Natural killer cell (primary cell): ENCODE measurements at regions of chr6 and their contacts with region 1.

Region 1: DNA sequence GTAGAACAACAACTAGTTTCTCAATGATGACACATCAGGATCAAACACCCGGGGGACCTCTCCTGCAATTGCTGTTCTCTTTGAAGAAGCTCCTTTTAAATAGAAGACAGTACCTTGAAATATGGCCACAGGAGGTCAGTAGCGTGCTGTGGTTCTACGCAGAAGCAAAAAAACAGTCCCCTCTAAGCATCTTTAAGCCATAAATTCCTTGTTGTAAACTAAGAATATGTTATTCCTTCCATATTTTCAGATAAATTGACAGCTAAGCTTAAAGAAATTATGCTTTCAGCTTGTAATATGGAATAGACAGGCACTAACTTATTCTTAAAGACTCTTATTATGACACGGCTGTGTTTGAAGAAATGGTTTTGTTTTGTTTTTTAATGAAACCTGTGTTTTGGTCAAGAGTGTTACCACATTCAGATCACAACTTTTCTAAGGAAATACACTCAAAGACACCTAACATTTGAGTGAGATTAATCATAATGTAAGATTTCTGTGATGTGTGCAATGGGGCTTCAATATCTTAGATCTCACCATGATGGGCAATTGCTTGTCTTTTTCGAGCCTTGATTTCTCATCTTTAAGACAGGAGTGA is 49.7 kb upstream of the IL20RA start:
- DNase-seq: peak; percentile 30 to 81
- ATAC-seq: peak; percentile 73 to 85 (median 84)
- H3K4me3 ChIP-seq: peak overlapping the region; percentile 4
- H3K4me3 Mint-ChIP-seq: peak overlapping the region; percentile 68
- H3K27ac ChIP-seq: peak overlapping the region; percentile 23
- H3K27ac Mint-ChIP-seq: peak overlapping the region; percentile 36 to 45
- H3K4me1 ChIP-seq: peaks cover 12% of the 10 kb centered on the region
- H3K4me1 Mint-ChIP-seq: peaks cover 20 to 24% of the 10 kb centered on the region in 2 donors
- H3K27me3 ChIP-seq: no peaks in the 10 kb centered on the region
- H3K27me3 Mint-ChIP-seq: peaks cover 6 to 7% of the 10 kb centered on the region in 2 donors
- CTCF ChIP-seq: peak; percentile 80

Region 2: DNA sequence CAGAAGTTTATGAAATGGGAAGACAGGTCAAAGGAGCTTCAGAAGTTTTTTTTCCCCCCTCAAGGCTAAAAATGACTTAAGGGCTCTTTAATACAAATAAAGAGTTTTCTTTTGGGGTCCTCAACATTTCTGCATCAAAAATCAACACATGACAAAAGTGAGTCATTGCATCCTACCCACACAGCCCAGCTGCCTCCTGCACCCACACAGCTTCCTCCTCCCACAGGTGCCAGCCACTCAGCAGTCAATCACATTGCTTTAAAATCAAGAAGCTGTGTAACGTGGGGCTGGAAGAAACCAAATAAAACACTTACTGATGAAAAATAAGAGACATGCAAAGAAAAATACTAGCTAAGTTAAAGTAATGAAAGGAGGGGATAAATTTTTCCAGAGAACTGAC is 370.7 kb before region 1 on chr6:
- intact Hi-C with region 1: no loop called
- DNase-seq: peak; percentile 21 to 52
- ATAC-seq: peak; percentile 87 to 99 (median 94)
- H3K4me3 ChIP-seq: no peak overlapping the region
- H3K4me3 Mint-ChIP-seq: no peak overlapping the region
- H3K27ac ChIP-seq: no peak overlapping the region
- H3K27ac Mint-ChIP-seq: peak overlapping the region; percentile 32 to 43
- H3K4me1 ChIP-seq: peaks cover 12% of the 10 kb centered on the region
- H3K4me1 Mint-ChIP-seq: peaks cover 27 to 52% of the 10 kb centered on the region in 2 donors
- H3K27me3 ChIP-seq: no peaks in the 10 kb centered on the region
- H3K27me3 Mint-ChIP-seq: no peaks in the 10 kb centered on the region
- CTCF ChIP-seq: no peak

Region 3: GRCh38 chr6:136989571-136990241 is 104.8 kb before region 1 on chr6:
- intact Hi-C with region 1: no loop called
- DNase-seq: no peak
- ATAC-seq: peak in 1 of 3 donors; percentile 25
- H3K4me3 ChIP-seq: no peak overlapping the region
- H3K4me3 Mint-ChIP-seq: no peak overlapping the region
- H3K27ac ChIP-seq: no peak overlapping the region
- H3K27ac Mint-ChIP-seq: no peak overlapping the region
- H3K4me1 ChIP-seq: peaks cover 7% of the 10 kb centered on the region
- H3K4me1 Mint-ChIP-seq: no peaks in the 10 kb centered on the region
- H3K27me3 ChIP-seq: peaks cover 31% of the 10 kb centered on the region
- H3K27me3 Mint-ChIP-seq: peaks cover 64 to 78% of the 10 kb centered on the region in 2 donors
- CTCF ChIP-seq: no peak

Region 4: DNA sequence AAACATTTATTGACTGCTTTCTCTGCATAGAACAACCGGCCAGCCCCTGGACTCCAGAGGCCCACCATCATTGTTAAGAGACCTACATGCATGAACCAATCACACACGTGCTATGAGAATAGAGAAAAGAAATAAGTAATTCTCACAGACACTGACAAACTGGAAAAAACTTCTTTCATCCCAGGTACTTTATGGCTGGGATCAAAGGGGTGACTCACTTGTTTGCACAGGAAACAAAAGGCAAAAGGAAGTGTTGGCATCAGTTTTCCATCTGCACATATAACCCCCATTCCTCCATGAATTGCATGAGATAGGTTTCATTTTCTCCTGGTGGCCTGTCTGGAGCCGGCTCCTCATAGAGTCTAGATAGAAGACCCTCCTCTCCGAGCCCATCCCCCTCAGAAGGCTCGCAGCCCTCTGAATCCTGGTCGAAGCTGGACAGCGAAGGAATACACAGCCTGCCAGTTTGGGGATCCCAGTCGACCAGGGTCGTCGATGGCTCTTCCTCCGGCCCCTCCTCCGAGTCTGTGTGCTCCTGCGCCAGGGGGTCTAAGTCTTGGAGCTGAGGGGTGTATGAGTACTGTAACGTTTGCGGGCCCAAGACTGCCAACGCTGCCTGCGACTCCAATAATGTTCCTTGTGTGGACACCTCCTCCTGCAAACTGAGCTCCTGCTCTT is 93.1 kb before region 1 on chr6:
- intact Hi-C with region 1: no loop called
- DNase-seq: no peak
- ATAC-seq: no peak
- H3K4me3 ChIP-seq: no peak overlapping the region
- H3K4me3 Mint-ChIP-seq: no peak overlapping the region
- H3K27ac ChIP-seq: no peak overlapping the region
- H3K27ac Mint-ChIP-seq: no peak overlapping the region
- H3K4me1 ChIP-seq: no peaks in the 10 kb centered on the region
- H3K4me1 Mint-ChIP-seq: no peaks in the 10 kb centered on the region
- H3K27me3 ChIP-seq: peaks cover 26% of the 10 kb centered on the region
- H3K27me3 Mint-ChIP-seq: peaks cover 40 to 86% of the 10 kb centered on the region in 2 donors
- CTCF ChIP-seq: no peak

Region 5: DNA sequence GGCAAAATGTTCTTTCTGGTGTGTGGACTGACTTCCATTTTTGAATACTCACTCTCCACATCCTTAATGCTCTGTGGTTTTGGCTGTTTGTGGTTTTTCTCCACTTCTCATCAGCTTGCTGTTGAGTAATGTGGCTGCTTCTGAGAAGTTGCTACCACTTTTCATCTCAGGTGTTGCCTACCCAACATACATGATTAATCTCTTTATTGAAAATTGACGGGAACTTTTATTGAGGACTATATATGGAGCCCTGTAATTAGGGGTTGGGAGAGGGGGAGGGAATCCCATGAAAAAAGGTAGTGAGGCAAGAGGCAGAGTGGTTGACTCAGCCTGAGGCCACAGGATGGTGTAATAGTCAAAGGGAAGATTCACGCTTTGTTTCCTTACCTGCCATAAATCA is 61.3 kb after region 1 on chr6:
- intact Hi-C with region 1: loop called (anchors 5 kb)
- DNase-seq: peak in 1 of 2 donors; percentile 74
- ATAC-seq: peak; percentile 85 to 98 (median 86)
- H3K4me3 ChIP-seq: no peak overlapping the region
- H3K4me3 Mint-ChIP-seq: peak overlapping the region; percentile 72
- H3K27ac ChIP-seq: no peak overlapping the region
- H3K27ac Mint-ChIP-seq: peak overlapping the region; percentile 45 to 89
- H3K4me1 ChIP-seq: peaks cover 19% of the 10 kb centered on the region
- H3K4me1 Mint-ChIP-seq: peaks cover 36 to 43% of the 10 kb centered on the region in 2 donors
- H3K27me3 ChIP-seq: peaks cover 3% of the 10 kb centered on the region
- H3K27me3 Mint-ChIP-seq: peaks cover 14 to 23% of the 10 kb centered on the region in 2 donors
- CTCF ChIP-seq: no peak

Region 6: GRCh38 chr6:137165375-137166246 is 71.1 kb after region 1 on chr6:
- intact Hi-C with region 1: loop called (anchors 5 kb)
- DNase-seq: peak; percentile 38 to 58
- ATAC-seq: peak; percentile 70 to 82 (median 72)
- H3K4me3 ChIP-seq: no peak overlapping the region
- H3K4me3 Mint-ChIP-seq: peak overlapping the region; percentile 77
- H3K27ac ChIP-seq: peak overlapping the region; percentile 5
- H3K27ac Mint-ChIP-seq: peak overlapping the region; percentile 39 to 53
- H3K4me1 ChIP-seq: peaks cover 27% of the 10 kb centered on the region
- H3K4me1 Mint-ChIP-seq: peaks cover 44 to 47% of the 10 kb centered on the region in 2 donors
- H3K27me3 ChIP-seq: no peaks in the 10 kb centered on the region
- H3K27me3 Mint-ChIP-seq: peaks cover 22 to 31% of the 10 kb centered on the region in 2 donors
- CTCF ChIP-seq: no peak

Region 7: GRCh38 chr6:137313928-137314855 is 219.7 kb after region 1 on chr6:
- intact Hi-C with region 1: loop called (anchors 1 kb)
- DNase-seq: peak; percentile 44 to 87
- ATAC-seq: peak; percentile 81 to 88 (median 81)
- H3K4me3 ChIP-seq: no peak overlapping the region
- H3K4me3 Mint-ChIP-seq: no peak overlapping the region
- H3K27ac ChIP-seq: no peak overlapping the region
- H3K27ac Mint-ChIP-seq: no peak overlapping the region
- H3K4me1 ChIP-seq: peaks cover 9% of the 10 kb centered on the region
- H3K4me1 Mint-ChIP-seq: peaks cover 6 to 9% of the 10 kb centered on the region in 2 donors
- H3K27me3 ChIP-seq: no peaks in the 10 kb centered on the region
- H3K27me3 Mint-ChIP-seq: peaks cover 0 to 4% of the 10 kb centered on the region in 2 donors
- CTCF ChIP-seq: peak; percentile 82

Region 8: GRCh38 chr6:137415127-137415833 is 320.8 kb after region 1 on chr6:
- intact Hi-C with region 1: loop called (anchors 1 kb)
- DNase-seq: peak; percentile 50 to 85
- ATAC-seq: peak; percentile 90 to 93 (median 91)
- H3K4me3 ChIP-seq: peak overlapping the region; percentile 41
- H3K4me3 Mint-ChIP-seq: peak overlapping the region; percentile 93
- H3K27ac ChIP-seq: peak overlapping the region; percentile 87
- H3K27ac Mint-ChIP-seq: peak overlapping the region; percentile 94 to 98
- H3K4me1 ChIP-seq: peaks cover 16% of the 10 kb centered on the region
- H3K4me1 Mint-ChIP-seq: peaks cover 20 to 21% of the 10 kb centered on the region in 2 donors
- H3K27me3 ChIP-seq: no peaks in the 10 kb centered on the region
- H3K27me3 Mint-ChIP-seq: no peaks in the 10 kb centered on the region
- CTCF ChIP-seq: peak; percentile 74

Region 9: DNA sequence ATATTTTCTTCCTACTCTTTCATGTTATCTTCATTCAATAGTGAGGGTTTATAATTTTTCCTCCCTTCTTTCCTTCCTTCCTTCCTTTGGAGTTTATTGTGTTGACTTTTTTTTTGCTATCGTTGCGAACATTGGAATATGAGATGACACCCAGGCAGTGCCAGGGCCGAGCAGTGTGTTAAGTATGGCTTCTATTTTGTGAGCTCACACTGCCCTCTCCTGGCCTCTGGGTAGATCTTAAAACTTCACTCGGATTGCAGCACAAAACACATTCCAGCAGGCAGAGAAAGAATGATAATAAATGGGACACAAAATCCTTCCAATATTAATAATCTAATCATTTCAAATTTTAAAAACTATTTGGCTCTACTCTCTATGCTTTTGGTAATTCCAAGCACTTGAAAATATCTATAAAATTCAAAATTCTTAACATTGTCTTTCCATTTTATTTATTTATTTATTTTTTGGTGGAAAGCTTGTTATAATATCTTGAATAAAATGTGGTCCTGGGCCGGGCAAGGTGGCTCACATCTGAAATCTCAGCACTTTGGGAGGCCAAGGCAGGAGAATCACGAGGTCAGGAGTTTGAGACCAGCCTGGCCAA is 547.1 kb after region 1 on chr6:
- intact Hi-C with region 1: loop called (anchors 1 kb)
- DNase-seq: peak; percentile 47 to 85
- ATAC-seq: peak; percentile 82 to 95 (median 92)
- H3K4me3 ChIP-seq: no peak overlapping the region
- H3K4me3 Mint-ChIP-seq: no peak overlapping the region
- H3K27ac ChIP-seq: no peak overlapping the region
- H3K27ac Mint-ChIP-seq: no peak overlapping the region
- H3K4me1 ChIP-seq: peaks cover 2% of the 10 kb centered on the region
- H3K4me1 Mint-ChIP-seq: peaks cover 0 to 5% of the 10 kb centered on the region in 2 donors
- H3K27me3 ChIP-seq: no peaks in the 10 kb centered on the region
- H3K27me3 Mint-ChIP-seq: peaks cover 8 to 31% of the 10 kb centered on the region in 2 donors
- CTCF ChIP-seq: peak; percentile 86